Dorsolateral prefrontal cortex (tissue), 120 donors: ENCODE measurements at regions of chr5 and their contacts with region 1.

Region 1: DNA sequence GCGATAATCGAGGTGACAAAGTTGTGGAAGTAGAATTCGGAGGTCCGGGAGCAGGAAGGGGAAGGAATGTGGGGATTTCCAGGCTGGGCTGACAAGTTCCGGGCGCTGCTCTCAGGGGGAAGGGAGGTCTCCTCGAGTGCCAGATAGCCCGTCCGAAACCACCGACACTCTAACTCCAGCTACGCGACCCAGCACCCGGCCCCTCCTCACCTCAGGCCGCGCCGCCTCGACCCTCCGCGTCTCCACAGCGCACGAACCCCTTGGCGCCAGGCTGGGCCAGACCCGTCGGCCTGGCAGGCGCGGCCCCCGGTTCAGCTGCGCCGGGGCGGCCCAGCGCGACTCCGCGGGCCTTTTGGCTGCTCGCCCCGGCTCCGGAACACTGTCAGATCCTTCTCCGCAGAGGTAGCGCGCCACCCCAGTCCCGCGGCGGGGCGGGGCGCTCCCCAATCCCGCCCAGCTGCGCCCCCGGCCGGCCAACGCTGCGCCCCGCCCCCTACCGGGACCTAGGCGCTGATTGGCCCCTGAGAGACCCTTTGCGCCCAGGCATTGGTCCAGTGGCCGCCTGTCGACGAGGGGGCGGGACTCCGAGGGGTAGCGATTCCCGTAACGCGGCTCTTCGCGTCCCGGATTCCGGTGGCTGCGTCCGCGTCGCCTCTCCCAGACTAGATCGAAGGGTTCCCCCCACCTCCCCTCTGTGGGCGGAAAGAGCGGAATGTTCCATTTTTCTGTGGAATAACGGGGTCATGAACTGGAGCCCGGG is at the start of gene IL6ST:
- DNase-seq: peak; percentile 94 to 99 (median 98)
- H3K4me3 ChIP-seq: peak within 1 kb of the TSS; percentile 54 to 96 (median 85)
- H3K27ac ChIP-seq: peak within 1 kb of the TSS; percentile 84 to 100 (median 98)
- H3K27me3 ChIP-seq: no peaks in the 10 kb centered on the region
- CTCF ChIP-seq: peak in 53 of 56 donors; percentile 15 to 82 (median 52)
- total RNA-seq, gene IL6ST: 155 to 373 (median 228) TPM

Region 2: GRCh38 chr5:55927772-55928662 is 66.7 kb before region 1 on chr5:
- intact Hi-C with region 1: no loop called
- DNase-seq: no peak
- H3K4me3 ChIP-seq: no peak overlapping the region
- H3K27ac ChIP-seq: no peak overlapping the region
- H3K27me3 ChIP-seq: peaks cover 0 to 5% (median 0%) of the 10 kb centered on the region in 45 donors
- CTCF ChIP-seq: no peak

Region 3: DNA sequence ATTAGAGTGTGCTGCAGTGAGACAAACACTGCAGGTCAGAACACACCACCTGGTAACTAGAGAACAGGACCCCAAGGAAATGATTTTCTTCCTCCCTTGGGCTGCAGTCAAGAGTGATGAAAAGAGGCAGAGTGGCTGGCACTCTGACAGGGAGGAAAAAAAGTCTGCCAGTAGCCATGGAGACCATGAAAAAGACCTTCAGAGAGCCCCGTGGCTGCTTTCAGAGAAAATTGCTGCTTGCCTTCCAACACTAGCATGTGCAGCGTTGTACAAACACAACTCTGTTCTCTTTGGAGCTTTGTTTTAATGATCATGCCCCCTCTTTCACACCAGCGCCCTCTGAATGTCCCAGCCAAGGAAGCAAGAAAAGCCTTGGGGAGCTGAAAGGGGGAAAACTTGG is 169.6 kb after region 1 on chr5:
- intact Hi-C with region 1: loop called in 1 of 2 experiments (anchors 5 kb)
- DNase-seq: peak in 9 of 10 donors; percentile 14 to 74 (median 51)
- H3K4me3 ChIP-seq: peak overlapping the region in 20 of 59 donors; percentile 1 to 51 (median 14)
- H3K27ac ChIP-seq: peak overlapping the region in 48 of 59 donors; percentile 8 to 85 (median 66)
- H3K27me3 ChIP-seq: no peaks in the 10 kb centered on the region
- CTCF ChIP-seq: peak in 2 of 56 donors; percentile 10 to 13

Region 4: GRCh38 chr5:56215019-56215830 is 220.5 kb after region 1 on chr5:
- intact Hi-C with region 1: no loop called
- DNase-seq: no peak
- H3K4me3 ChIP-seq: no peak overlapping the region
- H3K27ac ChIP-seq: no peak overlapping the region
- H3K27me3 ChIP-seq: no peaks in the 10 kb centered on the region
- CTCF ChIP-seq: no peak

Region 5: GRCh38 chr5:56814963-56815658 is 820.4 kb after region 1 on chr5 and contains the start of gene MAP3K1:
- intact Hi-C with region 1: loop called (anchors 5 to 10 kb)
- DNase-seq: peak; percentile 50 to 84 (median 66)
- H3K4me3 ChIP-seq: peak within 1 kb of the TSS; percentile 62 to 97 (median 88)
- H3K27ac ChIP-seq: peak within 1 kb of the TSS; percentile 25 to 98 (median 87)
- H3K27me3 ChIP-seq: no peaks in the 10 kb centered on the region
- CTCF ChIP-seq: peak in 15 of 56 donors; percentile 1 to 31 (median 16)
- total RNA-seq, gene MAP3K1: 4.9 to 12.5 (median 7.8) TPM

Region 6: GRCh38 chr5:56951946-56952691 is 957.4 kb after region 1 on chr5 and contains the start of gene MIER3:
- intact Hi-C with region 1: loop called in 1 of 2 experiments (anchors 5 kb)
- DNase-seq: peak; percentile 53 to 88 (median 66)
- H3K4me3 ChIP-seq: peak within 1 kb of the TSS; percentile 65 to 98 (median 83)
- H3K27ac ChIP-seq: peak within 1 kb of the TSS; percentile 56 to 95 (median 86)
- H3K27me3 ChIP-seq: no peaks in the 10 kb centered on the region
- CTCF ChIP-seq: no peak
- total RNA-seq, gene MIER3: 13.7 to 33.5 (median 22.7) TPM